ENCODE measurements at regions of chr7 and their contacts with region 1.

Region 1: DNA sequence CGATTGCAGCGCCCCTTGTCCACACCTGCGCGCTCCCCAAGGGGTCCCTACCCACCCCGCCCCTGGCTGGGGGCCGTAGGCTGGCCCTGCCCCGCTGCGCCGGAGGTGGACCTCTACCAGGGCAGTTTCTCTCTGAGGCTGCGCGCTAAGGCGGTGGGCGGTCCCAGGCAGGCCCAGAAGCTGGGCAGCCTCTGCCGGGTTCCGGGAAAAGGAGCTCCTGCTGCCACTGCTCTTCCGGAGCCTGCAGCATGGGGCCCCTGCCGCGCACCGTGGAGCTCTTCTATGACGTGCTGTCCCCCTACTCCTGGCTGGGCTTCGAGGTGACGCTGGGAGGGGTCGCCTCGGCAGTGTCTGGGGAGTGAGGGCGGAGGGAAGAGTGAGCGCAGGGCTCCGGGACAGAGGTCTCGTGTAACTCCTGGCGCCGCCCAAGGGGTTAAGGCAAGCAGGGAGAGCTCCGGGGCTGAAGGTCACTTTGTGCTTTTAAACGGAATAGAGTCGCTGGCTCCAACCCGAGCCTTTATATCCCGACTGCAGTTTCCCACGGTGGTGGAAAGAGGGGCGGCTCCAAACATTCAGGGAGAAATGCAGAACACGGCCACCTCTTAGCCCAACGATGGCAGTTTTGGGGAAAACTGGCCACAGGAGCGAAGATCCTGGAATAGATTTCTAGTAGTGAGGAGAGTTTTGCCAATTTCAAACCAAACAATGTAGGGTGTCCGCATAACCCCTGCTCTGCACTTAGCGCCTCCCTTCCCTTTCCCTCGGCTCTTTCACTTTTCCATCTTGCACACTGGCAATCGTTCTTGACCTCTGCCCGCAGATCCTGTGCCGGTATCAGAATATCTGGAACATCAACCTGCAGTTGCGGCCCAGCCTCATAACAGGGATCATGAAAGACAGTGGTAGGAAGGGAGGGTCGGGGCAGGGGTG is at the start of gene GSTK1:
- DNase-seq: peak; percentile 68 to 81
- H3K4me3 ChIP-seq: peak within 1 kb of the TSS; percentile 90
- H3K27ac ChIP-seq: peak within 1 kb of the TSS; percentile 36
- H3K4me1 ChIP-seq: peaks cover 48% of the 10 kb centered on the region
- H3K27me3 ChIP-seq: no peaks in the 10 kb centered on the region
- CTCF ChIP-seq: no peak
- total RNA-seq, gene GSTK1: 239 and 244 TPM in 2 replicates

Region 2: DNA sequence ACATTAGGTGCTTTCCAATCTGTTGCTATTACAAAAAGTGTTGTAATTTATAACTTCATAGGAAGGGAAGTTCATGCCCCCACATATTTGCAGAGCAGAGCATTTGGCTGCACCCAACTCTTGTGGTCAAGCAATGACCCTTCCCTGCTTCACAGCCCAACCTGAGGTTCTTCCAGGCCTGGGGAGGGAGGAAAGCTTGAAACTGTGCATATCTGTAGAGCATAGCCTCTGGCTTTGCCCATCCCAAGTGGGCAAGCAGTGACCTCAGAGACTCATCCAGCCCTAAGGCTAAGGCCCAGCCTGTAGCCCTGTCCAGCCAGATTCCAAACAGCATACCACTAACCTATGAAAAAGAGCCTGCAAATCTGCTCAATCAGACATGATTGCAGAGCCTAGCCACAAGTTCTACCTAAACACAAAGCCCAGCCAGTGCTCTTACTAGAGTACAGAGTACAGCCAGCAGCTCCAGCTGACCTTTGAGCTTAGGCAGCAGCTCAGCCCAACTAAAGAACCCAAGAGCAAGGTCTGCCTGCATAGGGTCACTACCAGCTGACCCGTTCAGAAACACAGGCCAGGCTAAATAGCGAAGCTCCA is 14.7 kb before region 1 on chr7:
- CTCF ChIA-PET with region 1: interaction called, 5 read pairs
- POLR2A ChIA-PET with region 1: interaction called, 4 read pairs
- intact Hi-C with region 1: loop called (anchors 1 kb)
- DNase-seq: peak; percentile 91 to 100
- H3K4me3 ChIP-seq: peak overlapping the region; percentile 32; the same call in 1 of the 2 replicates
- H3K27ac ChIP-seq: peak overlapping the region; percentile 95
- H3K4me1 ChIP-seq: peaks cover 76% of the 10 kb centered on the region
- H3K27me3 ChIP-seq: no peaks in the 10 kb centered on the region
- CTCF ChIP-seq: no peak

Region 3: GRCh38 chr7:143279186-143280098 is 15.9 kb after region 1 on chr7:
- CTCF ChIA-PET with region 1: interaction called, 5 read pairs
- POLR2A ChIA-PET with region 1: interaction called, 20 read pairs
- intact Hi-C with region 1: no loop called
- DNase-seq: peak; percentile 49 to 97
- H3K4me3 ChIP-seq: peak overlapping the region; percentile 16; the same call in 1 of the 2 replicates
- H3K27ac ChIP-seq: peak overlapping the region; percentile 82
- H3K4me1 ChIP-seq: peaks cover 43% of the 10 kb centered on the region
- H3K27me3 ChIP-seq: no peaks in the 10 kb centered on the region
- CTCF ChIP-seq: no peak

Region 4: DNA sequence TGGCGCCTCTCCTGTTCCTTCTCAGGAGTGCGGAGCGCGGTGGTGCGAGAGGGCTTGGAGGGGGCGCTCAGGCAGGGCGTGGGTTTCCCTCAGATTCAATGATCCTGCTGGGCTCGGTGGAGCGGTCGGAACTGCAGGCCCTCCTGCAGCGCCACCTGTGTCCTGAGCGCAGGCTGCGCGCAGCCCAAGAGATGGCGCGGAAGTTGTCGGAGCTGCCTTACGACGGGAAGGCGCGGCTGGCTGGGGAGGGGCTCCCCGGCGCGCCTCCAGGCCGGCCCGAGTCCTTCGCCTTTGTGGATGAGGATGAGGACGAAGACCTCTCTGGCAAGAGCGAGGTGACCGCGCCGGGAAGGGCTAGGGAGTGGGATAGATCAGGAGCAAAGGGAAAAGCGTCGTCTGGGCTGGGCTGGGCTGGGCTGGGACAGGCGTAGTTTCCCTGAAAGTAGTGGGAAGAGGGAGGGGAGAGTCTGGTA is 81.9 kb after region 1 on chr7:
- CTCF ChIA-PET with region 1: no interaction called
- POLR2A ChIA-PET with region 1: no interaction called
- intact Hi-C with region 1: no loop called
- DNase-seq: peak; percentile 49 to 71
- H3K4me3 ChIP-seq: peak overlapping the region; percentile 39; the same call in 1 of the 2 replicates
- H3K27ac ChIP-seq: no peak overlapping the region
- H3K4me1 ChIP-seq: no peaks in the 10 kb centered on the region
- H3K27me3 ChIP-seq: no peaks in the 10 kb centered on the region; the same call in none of the 2 replicates
- CTCF ChIP-seq: peak; percentile 57; the same call in 1 of the 2 replicates

Region 5: DNA sequence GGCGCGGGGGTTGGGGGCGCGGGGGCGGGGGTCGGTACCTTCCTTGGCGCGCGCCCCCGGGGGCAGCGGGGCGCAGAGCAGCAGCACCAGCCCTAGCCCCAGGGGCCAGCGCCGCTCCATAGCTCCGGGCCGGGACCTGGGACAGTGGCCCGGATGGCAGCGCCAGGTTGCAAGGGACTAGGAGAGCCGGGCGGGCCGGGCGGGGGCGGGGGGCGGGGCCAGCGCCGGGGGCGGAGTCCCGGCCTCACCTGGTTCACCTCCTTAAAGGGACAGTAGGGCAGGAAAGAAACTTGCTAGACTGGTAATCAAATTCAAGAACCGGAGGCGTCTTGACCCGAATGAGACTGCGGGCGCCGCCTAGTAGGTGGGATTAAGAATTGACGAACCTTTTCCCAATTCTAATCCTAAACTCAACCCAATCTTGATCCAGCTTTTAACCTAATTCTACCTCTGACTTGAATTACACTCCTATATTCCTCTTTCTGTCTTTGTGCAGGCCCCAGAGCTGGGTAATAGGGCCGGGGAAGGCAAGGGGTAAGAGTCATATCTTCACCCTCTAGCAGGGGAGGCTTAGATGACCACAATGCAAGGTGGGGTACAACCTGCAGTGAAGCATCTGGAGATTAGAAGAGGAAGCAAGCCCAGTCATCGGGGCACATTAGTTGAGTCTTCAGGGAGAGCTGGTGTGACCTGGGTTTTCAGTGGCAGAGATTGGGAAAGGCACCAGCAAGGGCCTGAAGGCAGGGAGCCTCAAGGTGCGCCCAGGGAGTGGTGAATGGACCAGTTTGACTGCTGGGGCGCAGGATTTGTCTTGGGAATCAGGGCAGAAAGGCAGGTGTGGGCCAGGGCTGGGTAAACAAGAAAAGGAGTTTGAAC is 145.4 kb after region 1 on chr7 and contains the start of gene EPHA1:
- CTCF ChIA-PET with region 1: no interaction called
- POLR2A ChIA-PET with region 1: no interaction called
- intact Hi-C with region 1: no loop called
- DNase-seq: peak; percentile 76 to 89
- H3K4me3 ChIP-seq: peak within 1 kb of the TSS; percentile 96
- H3K27ac ChIP-seq: peak within 1 kb of the TSS; percentile 33
- H3K4me1 ChIP-seq: peaks cover 23% of the 10 kb centered on the region
- H3K27me3 ChIP-seq: no peaks in the 10 kb centered on the region
- CTCF ChIP-seq: peak; percentile 83
- total RNA-seq, gene EPHA1: 35.5 and 39.3 TPM in 2 replicates

Measured in PC-9 (cell line).